Thyroid gland (tissue), 4 donors: ENCODE measurements at regions of chr2 and their contacts with region 1.

Region 1: DNA sequence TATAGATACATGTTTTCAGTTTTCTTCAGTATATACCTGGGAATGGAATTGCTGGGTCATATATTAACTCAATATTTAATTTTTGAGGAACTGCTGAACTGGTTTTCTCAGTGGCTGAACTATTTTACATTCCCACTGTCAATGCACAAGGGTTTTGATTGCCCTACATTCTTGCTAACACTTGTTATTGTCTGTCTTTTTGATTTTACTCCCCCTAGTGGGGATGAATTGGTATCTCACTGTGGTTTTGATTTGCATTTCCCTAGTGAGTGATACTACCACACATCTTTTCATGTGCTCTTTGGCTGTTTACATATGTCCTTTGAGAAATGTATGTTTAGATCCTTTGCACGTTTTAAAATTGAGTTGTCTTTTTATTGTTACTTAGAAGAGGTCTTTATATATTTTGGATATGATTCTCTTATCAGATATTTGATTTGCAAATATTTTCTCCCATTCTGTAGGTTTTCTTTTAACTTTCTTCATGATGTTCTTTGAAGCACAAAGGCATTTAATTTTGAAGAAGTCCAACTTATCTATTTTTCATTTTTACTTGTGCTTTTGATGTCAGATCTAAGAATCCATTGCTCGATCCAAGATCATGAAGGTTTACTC is 36.2 kb downstream of the ASB1 start:
- DNase-seq: no peak
- H3K4me3 ChIP-seq: no peak overlapping the region
- H3K27ac ChIP-seq: no peak overlapping the region
- H3K4me1 ChIP-seq: peaks cover 0 to 9% of the 10 kb centered on the region in 2 donors
- H3K27me3 ChIP-seq: no peaks in the 10 kb centered on the region
- CTCF ChIP-seq: peak; percentile 23 to 82 (median 60)
- POLR2A ChIP-seq: no peak

Region 2: DNA sequence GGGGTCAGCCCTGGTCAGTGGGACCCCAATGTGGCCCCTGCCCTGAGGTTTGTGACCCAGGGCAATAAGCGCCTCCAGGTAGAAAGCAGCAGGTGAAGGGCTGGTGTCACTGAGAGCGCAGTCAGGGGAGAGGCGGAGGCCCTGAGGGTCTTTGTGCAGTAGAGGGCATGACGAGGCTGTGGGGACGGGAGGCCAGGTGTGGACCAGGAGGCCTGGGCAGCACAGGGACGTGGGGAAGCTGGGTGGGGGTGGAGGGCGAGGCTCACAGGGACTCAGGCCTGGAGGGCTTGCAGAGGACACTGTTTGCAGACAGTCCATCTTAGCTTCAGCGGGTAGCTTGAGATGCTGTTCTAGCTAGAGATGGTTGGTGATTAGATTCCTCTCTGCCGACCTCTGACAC is 110.5 kb before region 1 on chr2:
- intact Hi-C with region 1: loop called (anchors 10 kb)
- DNase-seq: no peak
- H3K4me3 ChIP-seq: no peak overlapping the region
- H3K27ac ChIP-seq: no peak overlapping the region
- H3K4me1 ChIP-seq: no peaks in the 10 kb centered on the region
- H3K27me3 ChIP-seq: no peaks in the 10 kb centered on the region
- CTCF ChIP-seq: no peak
- POLR2A ChIP-seq: no peak

Region 3: GRCh38 chr2:238370823-238371372 is 92.0 kb before region 1 on chr2:
- intact Hi-C with region 1: loop called (anchors 5 kb)
- DNase-seq: peak; percentile 68 to 76
- H3K4me3 ChIP-seq: no peak overlapping the region
- H3K27ac ChIP-seq: peak overlapping the region in 1 of 3 donors; percentile 24
- H3K4me1 ChIP-seq: no peaks in the 10 kb centered on the region
- H3K27me3 ChIP-seq: no peaks in the 10 kb centered on the region
- CTCF ChIP-seq: peak; percentile 37 to 90 (median 75)
- POLR2A ChIP-seq: no peak